Body of pancreas (tissue), 4 donors: ENCODE measurements at regions of chr10 and their contacts with region 1.

Region 1: GRCh38 chr10:99612167-99612831 is 7.9 kb downstream of the SLC25A28 start:
- DNase-seq: peak; percentile 21 to 54 (median 28)
- ATAC-seq: peak; percentile 78
- H3K4me3 ChIP-seq: no peak overlapping the region
- H3K27ac ChIP-seq: no peak overlapping the region
- H3K4me1 ChIP-seq: peaks cover 13% of the 10 kb centered on the region
- H3K27me3 ChIP-seq: no peaks in the 10 kb centered on the region
- CTCF ChIP-seq: peak; percentile 59 to 83 (median 79)
- POLR2A ChIP-seq: no peak

Region 2: DNA sequence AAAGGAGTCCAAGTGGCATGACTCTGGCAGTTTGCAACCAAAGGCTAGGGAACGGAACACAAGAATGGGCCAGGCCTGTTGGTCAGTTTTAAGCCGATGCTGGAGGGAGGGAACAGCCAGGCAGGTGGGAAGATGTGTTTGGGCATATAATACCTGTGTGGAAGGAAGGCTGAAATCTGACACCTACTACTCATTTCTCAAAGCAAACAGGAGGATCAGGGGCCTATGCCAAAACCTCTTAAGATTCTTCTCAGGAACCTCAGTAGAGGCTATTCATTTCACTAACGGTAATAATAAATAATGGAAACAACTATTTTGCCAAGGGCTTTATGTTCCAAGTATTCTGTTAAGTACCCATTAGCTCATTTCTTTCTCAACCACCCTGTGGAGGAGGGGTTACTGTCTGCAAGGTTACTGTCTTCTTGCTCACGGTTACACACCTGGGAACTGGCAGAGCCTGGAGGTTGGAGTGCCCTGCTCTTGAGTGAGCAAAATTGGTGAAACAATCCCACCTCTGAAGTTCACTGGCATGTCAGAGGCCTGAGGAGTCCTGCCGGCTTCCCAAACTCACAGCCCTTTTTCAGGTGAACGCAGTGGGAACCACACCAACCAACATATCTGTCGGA is 217.4 kb before region 1 on chr10:
- intact Hi-C with region 1: loop called (anchors 5 kb)
- DNase-seq: no peak
- ATAC-seq: no peak
- H3K4me3 ChIP-seq: no peak overlapping the region
- H3K27ac ChIP-seq: no peak overlapping the region
- H3K4me1 ChIP-seq: peaks cover 8% of the 10 kb centered on the region
- H3K27me3 ChIP-seq: no peaks in the 10 kb centered on the region
- CTCF ChIP-seq: no peak
- POLR2A ChIP-seq: no peak

Region 3: DNA sequence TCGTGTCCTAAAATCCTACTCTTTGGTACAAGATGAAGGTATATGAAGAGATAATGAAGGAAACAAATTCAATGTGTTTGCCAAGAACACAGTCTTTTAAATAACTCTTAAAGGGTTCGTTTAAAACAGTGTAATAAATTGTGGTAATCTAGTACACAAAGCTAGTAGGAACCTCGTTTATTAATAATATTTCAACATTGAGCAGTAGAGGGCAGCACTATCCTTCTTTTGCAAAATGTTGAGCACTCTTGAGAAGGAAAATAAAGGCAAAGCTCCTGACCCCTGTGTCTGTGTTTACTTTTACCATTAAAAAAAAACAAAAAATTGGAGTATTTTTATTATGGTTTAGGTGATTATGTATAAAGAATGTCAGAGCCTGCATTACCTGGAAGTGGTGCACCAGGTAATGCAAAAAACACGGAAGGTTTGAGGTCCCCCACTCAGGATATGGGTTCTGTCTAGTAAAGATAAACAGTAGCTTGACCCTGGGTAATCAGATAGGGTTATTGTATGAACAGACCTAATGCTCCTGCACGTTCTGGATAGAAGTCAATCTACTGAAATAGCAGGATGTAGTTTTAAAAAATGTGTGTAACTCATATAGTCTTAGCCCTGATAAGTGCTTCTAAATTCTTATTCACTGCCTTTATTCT is 176.2 kb before region 1 on chr10:
- intact Hi-C with region 1: loop called (anchors 5 kb)
- DNase-seq: no peak
- ATAC-seq: peak; percentile 56
- H3K4me3 ChIP-seq: no peak overlapping the region
- H3K27ac ChIP-seq: no peak overlapping the region
- H3K4me1 ChIP-seq: peaks cover 43% of the 10 kb centered on the region
- H3K27me3 ChIP-seq: no peaks in the 10 kb centered on the region
- CTCF ChIP-seq: peak; percentile 16 to 64 (median 48)
- POLR2A ChIP-seq: no peak